Heart right ventricle (tissue), 16 donors: ENCODE measurements at regions of chr2 and their contacts with region 1.

Region 1: GRCh38 chr2:62195421-62196277 is at the start of gene B3GNT2:
- DNase-seq: peak; percentile 86 to 90
- ATAC-seq: peak; percentile 87 to 94 (median 90)
- H3K4me3 ChIP-seq: peak within 1 kb of the TSS; percentile 62 to 99 (median 92)
- H3K27ac ChIP-seq: peak within 1 kb of the TSS; percentile 91 to 97 (median 95)
- H3K4me1 ChIP-seq: peaks cover 0 to 48% (median 40%) of the 10 kb centered on the region in 9 donors
- H3K27me3 ChIP-seq: no peaks in the 10 kb centered on the region
- CTCF ChIP-seq: peak in 1 of 9 donors; percentile 2
- total RNA-seq, gene B3GNT2: 11.8 to 33.5 (median 18.1) TPM

Region 2: GRCh38 chr2:61538200-61538919 is 657.3 kb before region 1 on chr2 and contains the start of gene XPO1:
- intact Hi-C with region 1: loop called in 1 of 10 experiments (anchors 10 kb)
- DNase-seq: peak; percentile 99 to 100
- ATAC-seq: peak; percentile 93 to 98 (median 95)
- H3K4me3 ChIP-seq: peak within 1 kb of the TSS; percentile 58 to 81 (median 72)
- H3K27ac ChIP-seq: peak within 1 kb of the TSS; percentile 85 to 99 (median 94)
- H3K4me1 ChIP-seq: peaks cover 0 to 36% (median 32%) of the 10 kb centered on the region in 9 donors
- H3K27me3 ChIP-seq: no peaks in the 10 kb centered on the region
- CTCF ChIP-seq: peak in 1 of 9 donors; percentile 6
- total RNA-seq, gene XPO1: 50.0 to 77.3 (median 67.9) TPM

Region 3: DNA sequence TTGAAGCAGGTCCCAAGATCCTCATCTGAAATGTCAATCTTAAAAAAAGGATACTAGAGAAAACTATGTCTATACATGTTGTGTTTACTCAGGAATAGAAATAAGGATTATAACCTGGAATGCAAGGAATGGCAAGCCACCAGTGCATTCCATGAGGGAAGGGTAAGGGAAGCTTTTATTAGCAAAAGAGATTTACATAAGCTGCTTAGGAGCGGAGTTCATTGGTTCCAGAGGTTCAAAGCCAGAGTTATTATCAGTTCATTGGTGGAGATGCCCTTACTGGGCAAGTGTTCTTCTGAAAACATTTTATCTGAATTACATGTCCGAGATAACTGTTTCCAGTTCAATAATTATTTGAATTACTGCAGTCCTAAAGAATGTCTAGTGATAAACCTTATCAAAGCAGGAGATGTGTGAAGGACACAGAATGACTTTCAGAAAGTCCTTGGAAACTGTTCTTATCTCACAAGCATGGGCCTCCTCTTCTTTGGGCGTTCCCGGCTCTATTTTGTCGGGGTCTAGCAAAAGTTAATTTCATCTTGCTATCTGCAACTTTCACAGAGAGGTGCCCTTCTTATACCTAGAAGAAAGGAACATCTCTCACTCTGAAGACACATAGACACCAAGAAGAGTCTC is 266.7 kb before region 1 on chr2:
- intact Hi-C with region 1: loop called in 1 of 10 experiments (anchors 5 kb)
- DNase-seq: no peak
- ATAC-seq: peak in 5 of 8 donors; percentile 63 to 86 (median 80)
- H3K4me3 ChIP-seq: no peak overlapping the region
- H3K27ac ChIP-seq: peak overlapping the region in 6 of 10 donors; percentile 10 to 81 (median 71)
- H3K4me1 ChIP-seq: peaks cover 0 to 17% (median 5%) of the 10 kb centered on the region in 9 donors
- H3K27me3 ChIP-seq: no peaks in the 10 kb centered on the region
- CTCF ChIP-seq: no peak

Region 4: DNA sequence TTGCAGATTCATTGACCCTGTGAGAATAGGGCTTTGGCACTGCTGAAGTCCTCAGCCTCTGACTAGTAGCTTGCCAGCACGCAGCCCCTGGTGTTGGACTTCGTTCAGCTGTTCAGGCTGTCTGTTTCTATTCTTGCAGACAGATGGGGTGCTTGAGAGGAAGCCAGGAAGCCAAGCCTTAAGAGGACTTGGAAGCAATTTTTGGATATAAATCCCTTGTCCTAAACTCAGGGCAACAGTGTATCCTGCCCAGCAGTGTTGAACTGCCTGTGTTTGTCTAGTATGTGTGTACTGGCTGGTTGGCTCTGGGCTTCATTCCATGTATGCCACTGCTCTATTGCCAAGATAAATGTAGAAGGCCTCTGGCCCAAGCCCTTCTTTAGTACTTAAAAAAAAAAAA is 181.5 kb before region 1 on chr2:
- intact Hi-C with region 1: loop called in 4 of 10 experiments (anchors 5 to 10 kb)
- DNase-seq: peak; percentile 62 to 82
- ATAC-seq: peak; percentile 89 to 99 (median 97)
- H3K4me3 ChIP-seq: no peak overlapping the region
- H3K27ac ChIP-seq: peak overlapping the region in 7 of 10 donors; percentile 5 to 65 (median 55)
- H3K4me1 ChIP-seq: peaks cover 4 to 34% (median 23%) of the 10 kb centered on the region in 9 donors
- H3K27me3 ChIP-seq: no peaks in the 10 kb centered on the region
- CTCF ChIP-seq: peak in 7 of 9 donors; percentile 35 to 67 (median 51)

Region 5: DNA sequence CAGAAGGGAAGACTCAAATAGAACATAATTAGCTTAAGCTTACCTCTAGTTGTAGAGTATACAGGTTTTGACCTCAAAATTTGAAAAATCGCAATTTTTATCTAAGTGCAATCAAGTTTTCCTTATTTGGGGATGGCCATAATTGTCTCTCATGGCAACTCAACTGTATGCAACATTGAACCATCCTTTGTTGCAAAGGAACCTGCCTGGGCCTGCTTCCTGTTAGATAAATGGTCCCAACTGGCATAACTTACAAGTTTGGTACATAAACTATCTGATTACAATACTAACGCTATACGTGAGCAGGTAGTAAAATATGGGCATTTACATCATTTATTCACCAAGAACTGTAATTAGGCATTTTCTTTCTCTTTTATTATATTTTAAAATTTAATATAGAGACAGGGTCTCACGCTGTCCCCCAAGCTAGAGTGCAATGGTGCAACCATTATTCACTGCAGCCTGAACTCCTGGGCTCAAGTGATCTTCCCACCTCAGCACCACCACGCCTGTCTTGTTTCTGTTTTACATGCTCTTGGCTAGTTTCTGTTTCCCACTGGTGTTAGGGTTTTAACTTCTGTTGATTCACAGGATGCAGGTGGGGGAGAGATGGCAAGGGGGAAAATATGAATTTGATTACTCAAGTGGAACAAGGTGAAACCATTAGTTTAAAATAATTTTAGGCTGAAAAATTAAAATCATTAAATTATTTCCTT is 55.1 kb before region 1 on chr2:
- intact Hi-C with region 1: no loop called
- DNase-seq: no peak
- ATAC-seq: peak in 1 of 8 donors; percentile 31
- H3K4me3 ChIP-seq: no peak overlapping the region
- H3K27ac ChIP-seq: no peak overlapping the region
- H3K4me1 ChIP-seq: peaks cover 0 to 38% (median 12%) of the 10 kb centered on the region in 9 donors
- H3K27me3 ChIP-seq: no peaks in the 10 kb centered on the region
- CTCF ChIP-seq: no peak

Region 6: DNA sequence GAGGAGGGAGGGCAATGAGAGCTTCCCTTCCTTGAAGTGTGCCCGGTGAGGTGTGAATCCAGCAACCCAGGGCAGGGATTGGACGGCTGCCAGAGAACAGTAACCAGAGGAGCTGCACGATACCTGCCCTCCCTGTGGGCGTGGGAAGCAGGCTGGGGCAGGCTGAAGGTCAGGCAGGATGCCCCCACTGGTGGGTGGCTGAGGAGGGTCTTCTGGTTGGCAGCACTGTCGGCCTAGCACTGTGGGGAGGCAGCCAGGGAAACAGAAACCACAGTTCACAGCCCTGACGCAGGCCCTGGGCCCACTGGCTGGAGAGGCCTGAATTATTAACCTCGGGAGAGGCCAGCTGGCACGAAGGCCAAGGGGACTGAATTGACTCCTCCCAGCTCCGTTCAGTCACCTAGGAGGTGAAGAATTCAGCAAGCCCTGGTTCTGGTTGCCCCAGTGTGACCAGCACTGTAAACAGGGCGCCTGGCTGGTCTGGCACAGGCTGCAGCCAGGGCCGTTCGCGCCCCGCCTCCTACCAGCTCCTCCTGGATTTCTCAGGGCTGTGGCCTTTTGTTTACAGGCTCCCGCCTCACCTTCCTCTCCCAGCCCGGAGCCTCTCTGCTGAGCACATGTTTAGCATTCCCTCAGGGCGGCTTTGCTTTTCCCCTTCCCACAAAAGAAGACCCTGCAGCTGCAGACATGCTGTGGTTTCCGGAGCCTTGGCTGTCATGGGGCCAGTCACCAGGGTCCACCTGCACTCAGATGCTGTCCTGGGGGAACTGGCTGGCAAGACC is 98.0 kb after region 1 on chr2:
- intact Hi-C with region 1: loop called in 4 of 10 experiments (anchors 5 to 10 kb)
- DNase-seq: peak; percentile 47 to 58
- ATAC-seq: peak; percentile 71 to 85 (median 80)
- H3K4me3 ChIP-seq: peak overlapping the region in 1 of 10 donors; percentile 5
- H3K27ac ChIP-seq: peak overlapping the region; percentile 15 to 69 (median 64)
- H3K4me1 ChIP-seq: peaks cover 13 to 56% (median 38%) of the 10 kb centered on the region in 9 donors
- H3K27me3 ChIP-seq: no peaks in the 10 kb centered on the region
- CTCF ChIP-seq: no peak

Region 7: DNA sequence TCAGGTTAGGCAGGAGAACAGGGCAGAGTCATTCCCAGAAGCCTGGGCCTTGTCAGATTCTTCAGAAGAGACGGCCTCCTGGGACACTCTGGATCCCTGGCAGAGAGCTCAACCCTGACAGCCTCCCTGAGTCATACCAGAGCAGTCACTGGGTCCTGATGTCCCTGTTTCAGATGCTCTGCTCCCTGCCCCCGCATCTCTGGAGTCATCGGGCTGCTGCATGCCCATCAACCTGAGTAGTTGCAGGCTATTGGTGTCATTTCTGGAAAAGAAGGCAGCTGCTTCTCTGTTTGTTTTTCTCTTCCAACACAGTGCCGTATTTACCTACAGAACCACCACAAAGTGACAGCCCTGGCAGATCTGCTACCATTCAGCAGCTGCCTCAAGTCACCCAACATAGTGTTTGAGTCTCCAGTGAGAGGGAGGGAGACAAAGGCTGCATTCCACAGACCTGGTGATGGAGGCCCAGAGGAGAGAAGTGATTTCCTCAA is 145.4 kb after region 1 on chr2:
- intact Hi-C with region 1: loop called in 1 of 10 experiments (anchors 10 kb)
- DNase-seq: peak; percentile 46 to 48
- ATAC-seq: peak in 7 of 8 donors; percentile 51 to 99 (median 91)
- H3K4me3 ChIP-seq: no peak overlapping the region
- H3K27ac ChIP-seq: peak overlapping the region in 8 of 10 donors; percentile 1 to 59 (median 44)
- H3K4me1 ChIP-seq: peaks cover 0 to 35% (median 15%) of the 10 kb centered on the region in 9 donors
- H3K27me3 ChIP-seq: no peaks in the 10 kb centered on the region
- CTCF ChIP-seq: no peak

Region 8: GRCh38 chr2:62631160-62632085 is 435.8 kb after region 1 on chr2:
- intact Hi-C with region 1: no loop called
- DNase-seq: no peak
- ATAC-seq: no peak
- H3K4me3 ChIP-seq: no peak overlapping the region
- H3K27ac ChIP-seq: no peak overlapping the region
- H3K4me1 ChIP-seq: no peaks in the 10 kb centered on the region
- H3K27me3 ChIP-seq: no peaks in the 10 kb centered on the region
- CTCF ChIP-seq: no peak

Region 9: DNA sequence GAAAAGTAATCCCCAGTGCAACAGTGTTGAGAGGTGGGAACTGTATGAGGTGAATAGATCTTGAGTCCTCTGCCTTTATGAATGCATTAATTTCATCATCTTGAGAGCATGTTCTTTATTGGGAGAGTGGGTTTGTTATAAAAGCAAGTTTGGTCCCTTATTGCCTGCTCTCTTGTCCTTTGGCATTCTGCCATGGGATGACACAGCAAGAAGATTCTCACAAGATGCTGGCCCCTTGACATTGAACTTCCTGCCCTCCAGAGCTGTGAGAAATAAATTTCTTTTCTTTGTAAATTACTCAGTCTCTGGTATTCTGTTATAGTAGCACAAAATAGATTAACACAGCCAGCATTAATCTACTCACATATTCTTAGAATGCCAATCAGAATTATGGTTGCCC is 618.5 kb after region 1 on chr2:
- intact Hi-C with region 1: no loop called
- DNase-seq: peak in 1 of 2 donors; percentile 25
- ATAC-seq: peak in 2 of 8 donors; percentile 37 to 42
- H3K4me3 ChIP-seq: no peak overlapping the region
- H3K27ac ChIP-seq: no peak overlapping the region
- H3K4me1 ChIP-seq: peaks cover 0 to 12% (median 0%) of the 10 kb centered on the region in 9 donors
- H3K27me3 ChIP-seq: no peaks in the 10 kb centered on the region
- CTCF ChIP-seq: no peak